BJ (cell line): ENCODE measurements at regions of chr16 and their contacts with region 1.

Region 1: DNA sequence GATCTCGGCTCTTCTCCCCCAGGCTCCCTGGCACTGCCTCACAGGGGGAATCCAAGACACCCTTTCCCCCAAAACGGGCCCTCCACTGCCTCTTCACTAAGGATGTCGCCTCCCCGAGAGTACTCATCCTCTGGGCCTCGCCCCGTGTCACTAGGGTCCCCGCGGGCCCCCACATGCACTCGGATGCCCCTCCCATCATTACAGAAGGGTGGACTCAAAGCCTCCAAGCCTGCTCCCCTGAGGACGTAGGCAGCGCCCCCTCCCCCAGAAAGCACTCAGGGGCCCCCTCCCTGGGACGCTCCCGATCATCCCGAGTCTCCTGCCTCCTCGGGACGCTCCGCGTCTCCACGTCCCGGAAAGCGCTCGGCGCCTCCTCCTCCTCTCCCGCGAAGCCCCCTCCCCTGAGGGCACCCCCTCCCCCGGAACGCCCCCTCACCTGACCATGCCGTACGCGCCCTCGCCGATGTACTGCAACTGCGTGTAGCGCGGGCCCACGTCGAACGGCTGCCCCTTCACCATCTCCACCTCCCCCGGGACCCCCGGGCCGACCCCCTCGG is 338 bp downstream of the MAPK3 start:
- DNase-seq: no peak
- H3K4me3 ChIP-seq: peak overlapping the region; percentile 96
- H3K27me3 ChIP-seq: no peaks in the 10 kb centered on the region
- CTCF ChIP-seq: no peak

Region 2: GRCh38 chr16:30032083-30032819 is 90.4 kb before region 1 on chr16:
- CTCF ChIA-PET with region 1: no interaction called
- POLR2A ChIA-PET with region 1: no interaction called
- DNase-seq: no peak
- H3K4me3 ChIP-seq: no peak overlapping the region
- H3K27me3 ChIP-seq: peaks cover 30% of the 10 kb centered on the region
- CTCF ChIP-seq: peak; percentile 83

Region 3: DNA sequence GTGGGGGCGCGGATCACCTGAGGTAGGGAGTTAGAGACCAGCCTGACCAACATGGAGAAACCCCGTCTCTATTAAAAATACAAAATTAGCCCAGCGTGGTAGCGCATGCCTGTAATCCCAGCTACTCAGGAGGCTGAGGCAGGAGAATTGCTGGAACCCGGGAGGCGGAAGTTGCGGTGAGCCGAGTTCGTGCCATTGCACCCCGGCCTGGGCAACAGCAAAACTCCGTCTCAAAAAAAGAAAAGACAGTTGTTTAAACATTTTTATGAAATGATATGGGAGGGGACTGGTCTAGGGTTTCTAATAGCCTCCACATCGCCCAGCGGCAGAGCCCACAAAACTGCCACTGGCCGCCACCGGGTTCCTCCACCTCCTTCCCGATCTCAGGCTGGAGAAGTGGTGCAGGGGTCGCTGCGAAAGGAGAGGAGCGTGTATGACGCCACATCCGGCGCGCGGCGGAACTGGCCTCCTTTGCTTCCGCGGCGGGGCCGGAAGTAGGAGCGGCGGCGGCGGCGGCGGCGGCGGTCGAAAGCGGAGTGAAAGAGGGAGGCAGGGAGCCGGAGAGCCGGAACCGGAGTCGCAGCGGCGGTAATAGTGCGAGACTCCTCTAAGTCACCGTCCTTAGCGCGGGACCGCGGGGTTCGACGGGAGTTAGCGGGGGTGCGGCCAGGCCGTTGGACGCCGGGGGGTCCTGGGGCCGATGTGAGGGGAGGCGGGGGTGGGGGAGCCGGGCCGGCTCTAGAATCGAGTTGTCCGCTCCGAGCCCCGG is 47.0 kb before region 1 on chr16 and contains the start of gene PPP4C:
- CTCF ChIA-PET with region 1: no interaction called
- POLR2A ChIA-PET with region 1: interaction called, 12 read pairs
- DNase-seq: no peak
- H3K4me3 ChIP-seq: peak within 1 kb of the TSS; percentile 60
- H3K27me3 ChIP-seq: no peaks in the 10 kb centered on the region
- CTCF ChIP-seq: peak; percentile 18; the same call in 1 of the 2 replicates
- polyA plus RNA-seq, gene PPP4C: 143 and 209 TPM in 2 replicates

Region 4: DNA sequence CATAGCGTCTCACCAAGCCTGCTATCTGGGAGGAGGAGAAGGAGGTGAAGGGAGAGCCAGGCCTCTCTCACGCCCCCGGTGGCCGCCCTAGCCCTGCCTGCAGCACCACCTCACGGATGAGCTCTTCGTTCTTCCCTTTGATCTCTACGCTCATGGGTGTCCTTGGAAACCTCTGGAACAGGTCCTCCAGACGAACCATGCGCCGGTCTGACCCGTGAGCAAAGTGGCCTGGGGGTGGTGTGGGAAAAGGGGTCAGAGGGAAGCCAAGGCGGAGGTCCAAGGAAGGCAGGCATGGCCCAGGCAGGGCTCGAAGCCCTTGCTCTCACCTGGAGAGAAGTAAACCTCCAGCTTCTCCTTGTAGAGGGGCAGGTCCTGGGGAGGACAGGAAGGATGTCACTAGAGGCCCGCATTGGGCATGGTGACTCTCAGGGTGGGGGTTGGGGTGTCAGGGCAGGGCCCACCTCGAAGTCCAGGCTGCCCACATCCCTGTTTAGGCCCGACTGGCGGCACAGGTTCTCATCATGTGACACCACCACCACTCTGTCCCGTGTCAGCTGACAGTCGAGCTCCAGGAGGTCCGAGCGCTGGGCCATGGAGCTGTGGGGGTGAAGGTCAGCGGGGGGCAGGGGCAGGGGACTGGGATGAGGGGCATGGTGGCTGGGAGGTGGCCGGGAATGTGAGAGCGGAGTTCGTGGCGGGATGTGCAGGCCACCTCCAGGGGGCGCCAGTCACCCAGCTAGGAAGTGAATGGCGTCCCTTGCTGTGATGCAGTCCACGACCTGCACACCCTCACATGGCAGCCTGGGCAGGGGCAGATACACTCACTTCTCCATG is 10.3 kb before region 1 on chr16:
- CTCF ChIA-PET with region 1: interaction called, 21 read pairs
- POLR2A ChIA-PET with region 1: no interaction called
- DNase-seq: no peak
- H3K4me3 ChIP-seq: no peak overlapping the region
- H3K27me3 ChIP-seq: no peaks in the 10 kb centered on the region
- CTCF ChIP-seq: peak; percentile 74